ENCODE measurements at regions of chr12 and their contacts with region 1.

Region 1: GRCh38 chr12:54359033-54359761 is 5.1 kb downstream of the GPR84 start:
- DNase-seq: peak; percentile 99
- H3K4me3 ChIP-seq: peak overlapping the region; percentile 65
- H3K27ac ChIP-seq: peak overlapping the region; percentile 97
- H3K27me3 ChIP-seq: no peaks in the 10 kb centered on the region
- CTCF ChIP-seq: no peak

Region 2: DNA sequence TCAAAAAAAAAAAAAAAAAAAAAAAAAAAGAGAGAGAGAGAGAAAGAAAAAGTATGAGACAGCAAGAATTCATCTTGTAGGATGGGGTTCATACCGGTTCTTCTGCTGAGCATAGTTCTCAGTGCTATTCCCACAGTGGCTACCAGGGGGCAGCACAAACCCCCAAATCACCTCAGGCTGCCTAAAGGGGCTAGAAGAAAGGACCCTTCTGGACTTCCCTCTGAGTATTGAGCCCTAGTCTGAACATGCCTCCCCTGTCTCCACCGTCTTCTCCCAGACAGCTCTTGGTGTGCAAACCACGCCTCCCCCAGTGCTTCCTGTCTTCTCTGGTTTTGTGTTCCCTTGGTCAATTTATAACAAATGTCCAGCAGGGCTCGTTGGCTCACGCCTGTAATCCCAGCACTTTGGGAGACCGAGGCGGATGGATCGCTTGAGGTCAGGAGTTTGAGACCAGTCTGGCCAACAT is 139.1 kb before region 1 on chr12:
- CTCF ChIA-PET with region 1: interaction called, 45 read pairs
- POLR2A ChIA-PET with region 1: interaction called, 5 read pairs
- DNase-seq: peak; percentile 53
- H3K4me3 ChIP-seq: no peak overlapping the region
- H3K27ac ChIP-seq: no peak overlapping the region
- H3K27me3 ChIP-seq: no peaks in the 10 kb centered on the region
- CTCF ChIP-seq: peak; percentile 88

Region 3: GRCh38 chr12:54279866-54280467 is 79.2 kb before region 1 on chr12 and contains the start of gene CBX5:
- CTCF ChIA-PET with region 1: interaction called, 3 read pairs
- POLR2A ChIA-PET with region 1: interaction called, 18 read pairs
- DNase-seq: peak; percentile 99
- H3K4me3 ChIP-seq: peak within 1 kb of the TSS; percentile 93
- H3K27ac ChIP-seq: peak within 1 kb of the TSS; percentile 87
- H3K27me3 ChIP-seq: no peaks in the 10 kb centered on the region
- CTCF ChIP-seq: no peak
- polyA plus RNA-seq, gene CBX5: 49.0 and 62.3 TPM in 2 replicates

Region 4: GRCh38 chr12:54285150-54286041 is 73.8 kb before region 1 on chr12:
- CTCF ChIA-PET with region 1: interaction called, 5 read pairs
- POLR2A ChIA-PET with region 1: interaction called, 18 read pairs
- DNase-seq: no peak
- H3K4me3 ChIP-seq: 0 out of 2 replicates have a peak overlapping the region, but pooled peaks have one; percentile 7
- H3K27ac ChIP-seq: peak overlapping the region; percentile 31
- H3K27me3 ChIP-seq: no peaks in the 10 kb centered on the region
- CTCF ChIP-seq: peak; percentile 46

Region 5: GRCh38 chr12:54294152-54294952 is 64.8 kb before region 1 on chr12:
- CTCF ChIA-PET with region 1: interaction called, 22 read pairs
- POLR2A ChIA-PET with region 1: interaction called, 7 read pairs
- DNase-seq: no peak
- H3K4me3 ChIP-seq: no peak overlapping the region
- H3K27ac ChIP-seq: no peak overlapping the region
- H3K27me3 ChIP-seq: peaks cover 13% of the 10 kb centered on the region
- CTCF ChIP-seq: peak; percentile 82

Region 6: DNA sequence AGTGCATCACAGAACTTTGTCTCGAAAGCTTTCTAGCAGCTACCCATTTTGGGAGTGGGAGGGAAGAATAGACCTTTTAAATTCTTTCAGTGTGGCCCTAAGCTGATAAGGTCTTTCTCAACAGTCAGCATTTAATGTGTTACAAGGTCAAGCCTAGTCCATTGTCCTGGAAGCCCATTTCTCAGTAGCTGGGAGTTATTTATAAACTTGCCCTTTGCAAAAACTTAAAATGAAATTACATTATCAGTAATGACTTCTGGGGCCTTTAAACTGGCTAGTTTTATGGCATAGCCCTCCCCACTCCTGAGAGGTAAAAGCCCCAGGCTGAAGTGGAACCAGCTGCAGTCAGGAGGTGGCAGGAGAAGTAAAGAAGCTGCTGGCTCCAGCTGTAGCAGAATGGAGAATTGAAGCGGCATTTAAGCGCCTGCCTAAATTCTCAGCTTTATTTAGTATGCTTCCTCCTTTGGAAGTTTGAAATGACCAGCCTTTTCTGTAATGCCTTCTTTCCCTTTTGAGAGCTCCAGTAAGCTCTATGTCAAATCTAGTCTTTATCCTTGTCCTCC is 21.8 kb before region 1 on chr12:
- CTCF ChIA-PET with region 1: interaction called, 48 read pairs
- POLR2A ChIA-PET with region 1: interaction called, 14 read pairs
- DNase-seq: no peak
- H3K4me3 ChIP-seq: no peak overlapping the region
- H3K27ac ChIP-seq: no peak overlapping the region
- H3K27me3 ChIP-seq: no peaks in the 10 kb centered on the region
- CTCF ChIP-seq: peak; percentile 11; the same call in 1 of the 2 replicates